ENCODE measurements at regions of chr1 and their contacts with region 1.

Region 1: DNA sequence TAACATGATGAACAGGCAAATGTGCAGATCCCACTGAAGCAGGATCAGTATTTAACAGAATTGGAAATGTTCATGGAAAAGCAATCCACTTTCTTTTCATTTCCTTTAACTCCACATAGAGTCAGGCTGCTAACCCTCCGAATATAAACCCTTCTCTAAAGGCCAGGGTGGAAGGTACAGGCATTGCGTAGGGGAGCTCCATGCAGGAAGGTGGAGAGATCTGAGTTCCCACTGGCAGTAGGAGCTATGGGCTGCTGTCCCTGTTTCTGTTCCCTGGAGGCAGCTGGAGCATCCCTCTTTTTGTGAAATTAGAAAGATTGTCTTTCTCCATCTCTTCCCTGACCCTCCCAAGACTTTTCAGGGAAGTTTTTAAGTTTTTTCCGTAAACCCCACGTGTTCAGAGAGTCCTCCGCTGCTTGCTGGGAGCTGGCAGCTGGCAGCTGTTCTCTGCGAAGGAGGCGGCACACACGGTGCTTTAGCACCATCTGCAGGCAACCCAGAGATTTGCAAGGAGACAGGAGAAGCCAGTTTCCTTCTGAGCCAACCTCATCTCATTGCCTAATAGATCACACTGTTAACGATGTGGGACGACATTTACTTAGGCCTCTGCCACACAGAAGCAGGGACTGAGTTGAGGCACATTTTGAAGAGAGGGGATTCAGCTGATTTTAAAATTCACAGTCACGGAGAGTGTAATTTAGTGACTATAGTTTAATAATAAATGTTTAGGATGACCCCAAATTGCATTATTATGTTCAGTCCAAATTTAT is 55.4 kb upstream of the HOOK1 start:
- DNase-seq: peak; percentile 83 to 93 (median 88)
- H3K4me3 ChIP-seq: peak overlapping the region in 1 of 4 donors; percentile 31
- H3K27ac ChIP-seq: peak overlapping the region in 3 of 5 donors; percentile 40 to 64 (median 60)
- H3K4me1 ChIP-seq: peaks cover 6 to 8% of the 10 kb centered on the region in 2 donors
- H3K27me3 ChIP-seq: no peaks in the 10 kb centered on the region
- CTCF ChIP-seq: peak; percentile 85 to 99 (median 98)
- POLR2A ChIP-seq: no peak

Region 2: GRCh38 chr1:58739856-58740466 is 1019.4 kb before region 1 on chr1:
- intact Hi-C with region 1: loop called in 1 of 2 experiments (anchors 10 kb)
- DNase-seq: peak in 2 of 7 donors; percentile 21 to 30
- H3K4me3 ChIP-seq: no peak overlapping the region
- H3K27ac ChIP-seq: no peak overlapping the region
- H3K4me1 ChIP-seq: no peaks in the 10 kb centered on the region
- H3K27me3 ChIP-seq: no peaks in the 10 kb centered on the region
- CTCF ChIP-seq: peak; percentile 71 to 93 (median 88)
- POLR2A ChIP-seq: no peak

Region 3: DNA sequence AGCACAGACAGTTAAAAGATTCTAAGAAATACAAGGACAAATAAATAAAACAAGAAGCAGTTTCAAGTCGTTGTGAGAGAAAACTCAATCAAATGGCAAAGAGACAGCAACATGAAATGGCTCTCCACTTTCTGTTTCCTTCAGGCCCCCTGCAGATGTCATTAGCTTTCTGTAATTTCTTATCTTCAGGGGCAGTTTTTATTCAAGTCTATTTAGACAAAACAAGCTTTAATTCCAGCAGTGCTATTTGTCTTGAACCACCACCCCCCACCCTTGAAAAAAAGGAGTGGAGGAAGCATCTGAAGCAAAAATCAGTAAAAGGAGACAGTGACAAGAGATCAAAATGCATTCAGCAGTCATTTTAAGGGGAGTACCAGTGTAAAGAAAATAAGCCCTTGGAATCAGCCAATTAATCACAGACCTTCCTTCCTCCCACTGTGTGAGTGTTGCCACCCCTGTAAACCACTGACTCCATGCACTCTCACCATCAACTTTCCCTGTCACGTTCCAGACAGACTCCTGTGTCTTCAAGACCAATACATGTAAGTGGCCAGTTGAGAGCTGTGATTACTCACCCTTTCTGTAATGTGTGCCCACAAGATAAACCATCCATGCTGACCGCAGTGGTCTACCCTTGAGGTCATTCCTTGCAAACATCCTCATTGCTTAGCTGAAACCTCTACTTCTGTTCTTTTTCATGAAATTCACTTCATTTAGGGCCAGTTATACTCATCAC is 80.7 kb before region 1 on chr1:
- intact Hi-C with region 1: no loop called
- DNase-seq: no peak
- H3K4me3 ChIP-seq: no peak overlapping the region
- H3K27ac ChIP-seq: peak overlapping the region in 1 of 5 donors; percentile 19
- H3K4me1 ChIP-seq: peaks cover 9 to 38% of the 10 kb centered on the region in 2 donors
- H3K27me3 ChIP-seq: no peaks in the 10 kb centered on the region
- CTCF ChIP-seq: no peak
- POLR2A ChIP-seq: no peak

Region 4: GRCh38 chr1:59707178-59707791 is 52.1 kb before region 1 on chr1:
- intact Hi-C with region 1: loop called in 1 of 2 experiments (anchors 10 kb)
- DNase-seq: peak; percentile 73 to 91 (median 85)
- H3K4me3 ChIP-seq: no peak overlapping the region
- H3K27ac ChIP-seq: peak overlapping the region; percentile 7 to 84 (median 66)
- H3K4me1 ChIP-seq: peaks cover 53 to 58% of the 10 kb centered on the region in 2 donors
- H3K27me3 ChIP-seq: no peaks in the 10 kb centered on the region
- CTCF ChIP-seq: no peak
- POLR2A ChIP-seq: no peak